ENCODE measurements at regions of chr22 and their contacts with region 1.

Region 1: DNA sequence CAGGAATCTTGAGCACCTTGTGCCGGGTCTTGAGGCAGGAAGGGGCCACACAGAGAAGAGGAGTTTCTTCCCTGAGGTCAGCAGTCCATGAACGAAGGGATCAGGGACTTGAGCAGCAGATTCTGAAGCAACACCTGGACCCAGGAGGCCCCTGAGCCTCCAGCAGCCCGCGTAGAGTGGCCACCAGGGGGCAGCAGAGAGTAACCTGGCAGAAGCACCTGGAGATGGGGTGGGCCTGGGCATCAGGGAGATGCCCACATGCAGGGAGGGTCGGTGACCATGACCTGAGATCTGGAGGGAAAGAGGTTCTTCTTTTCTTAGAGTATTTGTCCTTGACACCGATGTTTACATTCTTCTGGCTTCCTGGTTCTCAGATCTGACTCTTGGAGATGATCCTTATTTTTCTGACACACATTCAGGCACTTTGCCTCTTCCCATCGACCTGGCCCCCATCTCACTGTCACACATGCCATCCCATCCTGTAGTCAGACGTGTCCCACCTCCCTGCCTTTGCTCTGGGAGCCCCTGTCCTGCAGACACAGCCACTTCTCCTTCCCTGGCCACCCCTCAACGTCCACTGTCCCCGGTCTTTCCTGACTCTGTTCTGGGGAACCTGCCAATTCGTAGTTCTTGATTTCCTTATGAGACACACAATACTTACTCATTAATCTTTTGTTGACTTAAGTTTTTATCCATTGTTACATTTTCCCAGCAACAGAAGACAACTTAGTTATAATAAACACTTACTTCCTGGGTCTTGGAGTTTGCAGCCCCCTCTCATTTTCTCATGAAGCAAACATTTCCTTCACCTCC is 66.5 kb downstream of the GGTLC2 start:
- DNase-seq: peak; percentile 44 to 69 (median 54)
- H3K4me3 ChIP-seq: no peak overlapping the region
- H3K4me3 Mint-ChIP-seq: no peak overlapping the region
- H3K27ac ChIP-seq: no peak overlapping the region
- H3K27ac Mint-ChIP-seq: peak overlapping the region in 3 of 7 donors; percentile 34 to 77 (median 67)
- H3K4me1 ChIP-seq: peaks cover 30 to 32% of the 10 kb centered on the region in 2 donors
- H3K4me1 Mint-ChIP-seq: peaks cover 39% of the 10 kb centered on the region
- H3K27me3 ChIP-seq: no peaks in the 10 kb centered on the region
- H3K27me3 Mint-ChIP-seq: peaks cover 1 to 4% (median 3%) of the 10 kb centered on the region in 3 donors
- CTCF ChIP-seq: peak; percentile 100

Region 2: GRCh38 chr22:22728382-22728781 is 17.5 kb after region 1 on chr22:
- intact Hi-C with region 1: no loop called
- DNase-seq: no peak
- H3K4me3 ChIP-seq: no peak overlapping the region
- H3K4me3 Mint-ChIP-seq: no peak overlapping the region
- H3K27ac ChIP-seq: no peak overlapping the region
- H3K27ac Mint-ChIP-seq: no peak overlapping the region
- H3K4me1 ChIP-seq: no peaks in the 10 kb centered on the region
- H3K4me1 Mint-ChIP-seq: peaks cover 7% of the 10 kb centered on the region
- H3K27me3 ChIP-seq: no peaks in the 10 kb centered on the region
- H3K27me3 Mint-ChIP-seq: peaks cover 0 to 3% (median 2%) of the 10 kb centered on the region in 3 donors
- CTCF ChIP-seq: no peak

Region 3: DNA sequence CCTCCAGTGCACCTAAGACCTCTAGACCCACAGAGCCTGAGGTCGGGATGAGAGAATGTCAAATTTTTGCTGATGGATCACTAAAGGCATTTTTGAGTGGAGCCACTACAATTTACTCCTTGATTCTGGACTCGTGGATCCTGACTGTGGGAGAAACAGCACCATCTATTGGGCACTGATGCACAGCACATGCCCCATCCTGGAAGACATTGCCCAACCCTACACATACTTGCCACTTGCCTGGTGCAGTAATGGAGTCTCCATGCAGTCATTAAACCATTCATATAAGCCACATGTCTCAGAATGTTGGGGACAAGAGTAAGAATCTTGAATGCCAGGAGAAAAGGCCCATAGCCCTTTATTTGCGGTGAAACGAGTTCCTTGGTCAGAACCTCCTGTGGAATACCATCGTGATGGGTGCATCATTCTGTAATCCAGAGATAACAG is 37.4 kb after region 1 on chr22:
- intact Hi-C with region 1: loop called (anchors 2 to 5 kb)
- DNase-seq: peak; percentile 49 to 73 (median 67)
- H3K4me3 ChIP-seq: no peak overlapping the region
- H3K4me3 Mint-ChIP-seq: no peak overlapping the region
- H3K27ac ChIP-seq: no peak overlapping the region
- H3K27ac Mint-ChIP-seq: no peak overlapping the region
- H3K4me1 ChIP-seq: peaks cover 12 to 14% of the 10 kb centered on the region in 2 donors
- H3K4me1 Mint-ChIP-seq: peaks cover 24% of the 10 kb centered on the region
- H3K27me3 ChIP-seq: no peaks in the 10 kb centered on the region
- H3K27me3 Mint-ChIP-seq: peaks cover under 1 to 2% (median 2%) of the 10 kb centered on the region in 3 donors
- CTCF ChIP-seq: peak; percentile 88

Region 4: GRCh38 chr22:23077627-23078461 is 366.9 kb after region 1 on chr22:
- intact Hi-C with region 1: no loop called
- DNase-seq: no peak
- H3K4me3 ChIP-seq: no peak overlapping the region
- H3K4me3 Mint-ChIP-seq: no peak overlapping the region
- H3K27ac ChIP-seq: no peak overlapping the region
- H3K27ac Mint-ChIP-seq: peak overlapping the region in 1 of 7 donors; percentile 50
- H3K4me1 ChIP-seq: no peaks in the 10 kb centered on the region
- H3K4me1 Mint-ChIP-seq: no peaks in the 10 kb centered on the region
- H3K27me3 ChIP-seq: peaks cover 0 to 3% of the 10 kb centered on the region in 2 donors
- H3K27me3 Mint-ChIP-seq: peaks cover 0 to 10% (median 7%) of the 10 kb centered on the region in 3 donors
- CTCF ChIP-seq: no peak